Left lung (tissue), 14 donors: ENCODE measurements at regions of chr1 and their contacts with region 1.

Region 1: GRCh38 chr1:77126307-77126706 is 92.9 kb downstream of the PIGK start:
- DNase-seq: peak in 2 of 4 donors; percentile 39 to 68
- ATAC-seq: peak; percentile 93
- H3K4me3 ChIP-seq: no peak overlapping the region
- H3K27ac ChIP-seq: no peak overlapping the region
- H3K4me1 ChIP-seq: no peaks in the 10 kb centered on the region
- H3K27me3 ChIP-seq: no peaks in the 10 kb centered on the region
- CTCF ChIP-seq: peak; percentile 19 to 40

Region 2: DNA sequence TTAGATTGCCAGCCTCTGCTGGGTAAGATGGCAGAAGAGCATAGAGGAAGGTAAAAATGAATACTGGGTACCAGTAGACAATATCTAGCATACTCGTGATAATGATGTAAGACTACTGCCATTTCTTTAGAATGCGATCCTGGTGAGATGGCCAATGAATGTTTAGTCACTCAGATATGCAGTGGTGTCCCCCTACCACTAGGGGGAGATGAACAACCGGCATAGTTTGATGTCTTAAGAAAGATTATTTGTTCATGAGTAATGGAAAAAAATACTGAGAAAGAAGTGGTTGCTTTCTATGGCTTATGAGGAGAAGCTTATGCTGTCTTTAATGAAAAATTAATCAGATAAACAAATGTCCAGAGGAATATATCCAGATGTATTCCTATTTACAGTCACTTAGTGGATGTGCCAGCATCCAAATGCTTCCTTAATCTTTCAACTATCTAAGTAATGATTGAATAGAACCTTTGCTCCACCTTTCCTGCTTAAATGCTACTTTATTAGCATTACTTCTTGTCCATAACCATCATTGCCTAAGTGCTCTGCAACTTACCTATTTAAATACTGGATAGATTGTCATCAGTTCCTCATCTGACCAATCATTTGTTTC is 795.2 kb before region 1 on chr1:
- intact Hi-C with region 1: loop called in 1 of 2 experiments (anchors 10 kb)
- DNase-seq: peak in 1 of 4 donors; percentile 51
- ATAC-seq: peak; percentile 94
- H3K4me3 ChIP-seq: no peak overlapping the region
- H3K27ac ChIP-seq: no peak overlapping the region
- H3K4me1 ChIP-seq: peaks cover 0 to 3% of the 10 kb centered on the region in 2 donors
- H3K27me3 ChIP-seq: no peaks in the 10 kb centered on the region
- CTCF ChIP-seq: peak; percentile 80 to 93

Region 3: DNA sequence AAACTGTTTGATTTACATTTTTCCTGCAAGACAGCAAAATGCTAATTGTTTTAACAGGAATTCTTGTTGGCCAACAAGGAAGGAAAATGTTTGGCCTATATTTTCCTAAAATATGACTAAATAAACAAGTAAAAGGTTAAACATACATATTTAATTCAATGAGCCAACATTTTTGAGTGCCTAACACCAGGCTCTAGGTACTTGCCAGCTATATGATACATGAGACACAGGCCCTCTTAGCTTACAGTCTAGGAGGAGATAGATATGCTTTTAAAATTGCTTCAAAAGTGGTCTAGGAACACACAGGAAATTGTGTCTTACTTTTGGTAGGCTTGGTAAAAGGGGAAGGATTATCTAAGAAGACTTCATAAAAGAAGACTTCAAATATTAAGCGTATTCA is 42.1 kb after region 1 on chr1:
- intact Hi-C with region 1: no loop called
- DNase-seq: no peak
- ATAC-seq: no peak
- H3K4me3 ChIP-seq: no peak overlapping the region
- H3K27ac ChIP-seq: no peak overlapping the region
- H3K4me1 ChIP-seq: no peaks in the 10 kb centered on the region
- H3K27me3 ChIP-seq: no peaks in the 10 kb centered on the region
- CTCF ChIP-seq: no peak